ENCODE measurements at regions of chr6 and their contacts with region 1.

Region 1: GRCh38 chr6:155301867-155302266 is 12.4 kb downstream of the TFB1M start:
- DNase-seq: no peak
- CTCF ChIP-seq: no peak

Region 2: GRCh38 chr6:155287762-155288161 is 14.1 kb before region 1 on chr6:
- CTCF ChIA-PET with region 1: interaction called, 29 read pairs
- POLR2A ChIA-PET with region 1: no interaction called
- DNase-seq: no peak
- CTCF ChIP-seq: no peak